ENCODE measurements at regions of chr9 and their contacts with region 1.

Region 1: GRCh38 chr9:71806901-71807307 is 38.6 kb upstream of the CEMIP2 start:
- DNase-seq: peak; percentile 44 to 51
- H3K4me3 ChIP-seq: no peak overlapping the region
- H3K4me3 Mint-ChIP-seq: no peak overlapping the region
- H3K27ac Mint-ChIP-seq: no peak overlapping the region
- H3K4me1 ChIP-seq: no peaks in the 10 kb centered on the region
- H3K4me1 Mint-ChIP-seq: no peaks in the 10 kb centered on the region
- H3K27me3 ChIP-seq: no peaks in the 10 kb centered on the region
- H3K27me3 Mint-ChIP-seq: no peaks in the 10 kb centered on the region
- CTCF ChIP-seq: peak; percentile 31 to 33

Region 2: DNA sequence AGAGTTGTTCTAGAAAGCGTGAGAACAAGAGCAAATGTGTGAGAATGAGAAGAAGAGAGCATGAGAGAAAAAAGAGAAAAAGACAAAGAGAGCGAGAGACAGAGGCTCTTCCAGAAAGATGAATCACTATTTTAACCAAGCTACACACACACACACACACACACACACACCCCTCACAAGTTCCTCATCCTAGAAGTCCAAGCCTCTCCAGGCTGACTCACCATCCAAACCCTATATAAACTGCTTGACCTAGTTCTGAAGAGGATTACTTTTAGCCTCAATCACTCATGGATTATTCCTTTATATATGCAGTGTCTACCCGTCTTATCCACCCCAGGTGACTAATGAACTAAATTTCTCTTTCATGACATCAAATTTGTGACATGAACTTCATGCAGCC is 215.9 kb after region 1 on chr9:
- CTCF ChIA-PET with region 1: interaction called, 3 read pairs
- POLR2A ChIA-PET with region 1: no interaction called
- intact Hi-C with region 1: loop called (anchors 2 kb)
- DNase-seq: no peak
- H3K4me3 ChIP-seq: no peak overlapping the region
- H3K4me3 Mint-ChIP-seq: no peak overlapping the region
- H3K27ac Mint-ChIP-seq: no peak overlapping the region
- H3K4me1 ChIP-seq: no peaks in the 10 kb centered on the region
- H3K4me1 Mint-ChIP-seq: no peaks in the 10 kb centered on the region
- H3K27me3 ChIP-seq: no peaks in the 10 kb centered on the region
- H3K27me3 Mint-ChIP-seq: no peaks in the 10 kb centered on the region
- CTCF ChIP-seq: no peak

Region 3: DNA sequence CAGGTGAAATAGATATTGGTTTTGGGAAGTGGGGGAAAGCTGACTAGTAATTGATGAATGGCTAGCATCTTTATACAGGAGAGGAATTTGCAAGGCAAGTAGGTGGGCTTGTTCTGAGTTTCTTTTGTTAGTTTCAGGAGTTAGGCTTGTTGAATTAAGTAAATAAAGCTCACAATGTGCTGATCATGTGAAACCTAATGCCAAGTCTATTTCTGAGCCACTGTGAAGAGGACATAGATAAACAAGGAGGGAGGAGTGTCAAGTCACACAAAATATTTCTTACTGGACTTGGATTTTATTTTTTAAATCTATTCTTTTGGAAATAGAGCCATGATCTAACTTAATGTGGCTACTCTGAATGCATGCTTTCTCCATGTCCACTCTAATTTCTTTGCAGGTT is 362.3 kb after region 1 on chr9:
- CTCF ChIA-PET with region 1: no interaction called
- POLR2A ChIA-PET with region 1: no interaction called
- intact Hi-C with region 1: no loop called
- DNase-seq: no peak
- H3K4me3 ChIP-seq: no peak overlapping the region
- H3K4me3 Mint-ChIP-seq: no peak overlapping the region
- H3K27ac Mint-ChIP-seq: no peak overlapping the region
- H3K4me1 ChIP-seq: no peaks in the 10 kb centered on the region
- H3K4me1 Mint-ChIP-seq: peaks cover 2% of the 10 kb centered on the region
- H3K27me3 ChIP-seq: no peaks in the 10 kb centered on the region
- H3K27me3 Mint-ChIP-seq: no peaks in the 10 kb centered on the region
- CTCF ChIP-seq: no peak